CD4-positive, alpha-beta memory T cell (primary cell): ENCODE measurements at regions of chr3 and their contacts with region 1.

Region 1: DNA sequence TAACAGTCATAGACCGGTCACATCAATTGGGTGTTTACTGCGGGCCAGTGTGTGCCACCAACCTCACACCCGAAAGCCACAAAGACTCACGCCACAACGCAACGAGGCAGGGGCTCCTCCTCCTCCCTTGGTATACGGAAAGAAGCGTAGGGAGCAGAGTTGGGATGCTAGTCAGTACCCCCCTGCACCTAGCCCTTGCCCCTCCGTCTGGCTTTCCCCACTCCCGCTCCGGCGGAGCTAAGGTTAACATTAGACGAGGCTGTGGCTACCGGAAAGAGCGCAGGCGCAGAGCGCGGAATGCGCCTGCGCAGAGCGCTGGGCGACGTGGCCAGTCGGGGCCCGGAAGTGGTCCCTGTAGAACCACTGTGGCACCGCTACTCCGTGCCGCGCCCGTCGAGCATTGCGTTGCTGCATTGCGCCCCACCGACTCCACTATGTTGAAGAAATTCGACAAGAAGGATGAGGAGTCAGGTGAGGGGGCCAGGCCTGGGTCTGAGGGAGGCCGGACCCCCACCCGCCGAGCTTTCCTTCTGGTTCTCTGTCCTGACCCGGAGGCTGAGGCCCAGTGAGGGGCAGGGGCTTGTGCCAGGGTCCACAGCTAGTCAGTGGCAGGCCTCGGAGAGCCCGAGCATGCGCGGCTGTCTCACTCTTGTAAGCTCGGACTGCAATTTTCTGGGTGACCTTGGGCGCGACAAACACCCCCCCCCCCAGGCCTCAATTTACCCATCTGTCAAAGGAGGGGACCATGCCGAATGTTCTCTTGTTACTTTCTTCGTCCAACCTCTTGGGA is at the start of gene COPG1:
- DNase-seq: peak; percentile 82 to 91 (median 88)
- H3K4me3 ChIP-seq: peak within 1 kb of the TSS; percentile 88 to 91
- H3K4me3 Mint-ChIP-seq: peak within 1 kb of the TSS; percentile 91 to 98 (median 96)
- H3K27ac ChIP-seq: peak within 1 kb of the TSS; percentile 92
- H3K27ac Mint-ChIP-seq: peak within 1 kb of the TSS; percentile 92 to 98 (median 97)
- H3K4me1 ChIP-seq: peaks cover 30% of the 10 kb centered on the region
- H3K4me1 Mint-ChIP-seq: peaks cover 21 to 64% (median 42%) of the 10 kb centered on the region in 4 donors
- H3K27me3 ChIP-seq: no peaks in the 10 kb centered on the region
- H3K27me3 Mint-ChIP-seq: no peaks in the 10 kb centered on the region
- total RNA-seq, gene COPG1: 147 TPM

Region 2: DNA sequence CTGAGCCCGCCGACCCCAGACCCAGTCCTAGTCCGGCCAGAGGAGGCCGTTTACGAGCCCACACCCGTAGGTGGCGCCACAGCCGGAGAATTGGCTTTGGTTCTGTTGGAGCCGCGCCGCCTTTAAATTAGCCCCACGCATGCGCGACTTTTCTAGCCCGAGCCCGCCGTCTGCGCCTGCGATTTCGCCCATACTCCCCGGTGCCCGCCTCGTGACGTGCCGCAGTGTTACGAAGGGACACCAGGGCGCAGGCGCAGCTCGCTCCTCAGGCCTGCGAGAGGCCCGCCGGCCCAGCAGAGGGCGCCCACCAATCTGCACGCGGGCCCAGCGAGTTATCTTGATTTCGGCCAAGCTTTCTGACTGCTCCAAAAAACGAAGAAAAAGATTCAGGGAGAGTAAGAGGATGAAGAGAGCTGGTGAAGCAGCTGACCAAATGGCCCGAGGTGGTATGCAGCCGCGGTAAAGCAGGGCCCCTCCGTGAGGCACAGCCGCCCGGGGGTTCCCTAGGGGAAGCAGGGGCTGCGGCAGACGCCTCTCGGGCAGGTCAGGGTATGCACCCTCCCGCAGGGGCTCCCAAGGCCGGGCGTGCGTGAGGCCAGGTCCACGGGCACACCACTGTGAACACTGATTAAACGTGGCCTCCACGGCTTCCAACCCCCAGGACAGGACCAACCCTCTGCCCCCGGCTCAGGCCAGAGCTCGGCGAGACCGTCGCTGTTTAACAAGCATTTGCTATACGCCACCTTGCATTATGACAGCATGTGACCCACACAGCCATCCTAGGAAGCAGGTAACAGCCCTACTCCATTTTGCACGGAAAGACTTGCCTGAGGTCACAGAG is 631.7 kb before region 1 on chr3:
- CTCF ChIA-PET with region 1: interaction called, 4 read pairs
- POLR2A ChIA-PET with region 1: interaction called, 5 read pairs
- intact Hi-C with region 1: loop called (anchors 5 kb)
- DNase-seq: peak; percentile 98 to 99 (median 99)
- H3K4me3 ChIP-seq: peak overlapping the region; percentile 81 to 91
- H3K4me3 Mint-ChIP-seq: peak overlapping the region; percentile 93 to 99 (median 96)
- H3K27ac ChIP-seq: peak overlapping the region; percentile 88
- H3K27ac Mint-ChIP-seq: peak overlapping the region; percentile 93 to 99 (median 98)
- H3K4me1 ChIP-seq: peaks cover 23% of the 10 kb centered on the region
- H3K4me1 Mint-ChIP-seq: peaks cover 17 to 30% (median 23%) of the 10 kb centered on the region in 4 donors
- H3K27me3 ChIP-seq: no peaks in the 10 kb centered on the region
- H3K27me3 Mint-ChIP-seq: no peaks in the 10 kb centered on the region

Region 3: GRCh38 chr3:129003578-129004160 is 245.8 kb before region 1 on chr3:
- CTCF ChIA-PET with region 1: interaction called, 14 read pairs
- POLR2A ChIA-PET with region 1: interaction called, 3 read pairs
- intact Hi-C with region 1: no loop called
- DNase-seq: peak; percentile 50 to 64 (median 57)
- H3K4me3 ChIP-seq: no peak overlapping the region
- H3K4me3 Mint-ChIP-seq: peak overlapping the region in 4 of 8 donors; percentile 59 to 73 (median 64)
- H3K27ac ChIP-seq: no peak overlapping the region
- H3K27ac Mint-ChIP-seq: peak overlapping the region in 1 of 7 donors; percentile 47
- H3K4me1 ChIP-seq: peaks cover 36% of the 10 kb centered on the region
- H3K4me1 Mint-ChIP-seq: peaks cover 20 to 47% (median 32%) of the 10 kb centered on the region in 4 donors
- H3K27me3 ChIP-seq: peaks cover 25% of the 10 kb centered on the region
- H3K27me3 Mint-ChIP-seq: peaks cover 22 to 27% of the 10 kb centered on the region in 2 donors

Region 4: DNA sequence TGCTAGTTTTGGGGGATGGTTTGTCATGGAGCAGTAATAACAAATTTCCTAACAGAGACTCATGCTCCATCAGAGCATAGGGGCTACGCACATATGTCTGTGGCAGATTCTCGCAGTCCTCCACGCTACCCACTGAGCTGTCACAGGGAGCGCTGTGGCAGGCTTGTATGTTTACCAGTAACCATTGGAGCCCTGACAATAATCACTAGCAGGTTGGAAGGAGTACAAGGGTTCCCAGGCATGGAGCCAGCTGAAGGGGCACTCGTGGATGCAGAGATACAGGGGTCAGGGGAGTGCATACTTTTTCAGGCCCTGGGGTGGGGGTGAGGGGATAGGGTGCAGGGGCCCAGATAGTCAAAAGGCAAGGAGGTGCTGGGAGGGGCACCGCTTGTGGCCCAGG is 196.8 kb before region 1 on chr3:
- CTCF ChIA-PET with region 1: interaction called, 233 read pairs
- POLR2A ChIA-PET with region 1: interaction called, 7 read pairs
- intact Hi-C with region 1: loop called (anchors 1 kb)
- DNase-seq: no peak
- H3K4me3 ChIP-seq: no peak overlapping the region
- H3K4me3 Mint-ChIP-seq: no peak overlapping the region
- H3K27ac ChIP-seq: no peak overlapping the region
- H3K27ac Mint-ChIP-seq: peak overlapping the region in 3 of 7 donors; percentile 33 to 80 (median 52)
- H3K4me1 ChIP-seq: peaks cover 5% of the 10 kb centered on the region
- H3K4me1 Mint-ChIP-seq: peaks cover 6 to 8% (median 7%) of the 10 kb centered on the region in 4 donors
- H3K27me3 ChIP-seq: no peaks in the 10 kb centered on the region
- H3K27me3 Mint-ChIP-seq: no peaks in the 10 kb centered on the region

Region 5: GRCh38 chr3:129160891-129161859 is 88.3 kb before region 1 on chr3 and contains the start of gene ISY1:
- CTCF ChIA-PET with region 1: interaction called, 17 read pairs
- POLR2A ChIA-PET with region 1: interaction called, 5 read pairs
- intact Hi-C with region 1: loop called (anchors 1 kb)
- DNase-seq: peak; percentile 90 to 93 (median 92)
- H3K4me3 ChIP-seq: peak within 1 kb of the TSS; percentile 75 to 94
- H3K4me3 Mint-ChIP-seq: peak within 1 kb of the TSS; percentile 96 to 100 (median 97)
- H3K27ac ChIP-seq: peak within 1 kb of the TSS; percentile 97
- H3K27ac Mint-ChIP-seq: peak within 1 kb of the TSS; percentile 98 to 100 (median 99)
- H3K4me1 ChIP-seq: peaks cover 23% of the 10 kb centered on the region
- H3K4me1 Mint-ChIP-seq: peaks cover 24 to 59% (median 37%) of the 10 kb centered on the region in 4 donors
- H3K27me3 ChIP-seq: no peaks in the 10 kb centered on the region
- H3K27me3 Mint-ChIP-seq: no peaks in the 10 kb centered on the region
- total RNA-seq, gene ISY1: 29.5 to 34.3 TPM

Region 6: GRCh38 chr3:129224984-129225393 is 24.5 kb before region 1 on chr3:
- CTCF ChIA-PET with region 1: interaction called, 11 read pairs
- POLR2A ChIA-PET with region 1: interaction called, 3 read pairs
- intact Hi-C with region 1: no loop called
- DNase-seq: no peak
- H3K4me3 ChIP-seq: no peak overlapping the region
- H3K4me3 Mint-ChIP-seq: peak overlapping the region in 7 of 8 donors; percentile 2 to 64 (median 46)
- H3K27ac ChIP-seq: no peak overlapping the region
- H3K27ac Mint-ChIP-seq: peak overlapping the region; percentile 24 to 86 (median 67)
- H3K4me1 ChIP-seq: peaks cover 11% of the 10 kb centered on the region
- H3K4me1 Mint-ChIP-seq: peaks cover 6 to 31% (median 17%) of the 10 kb centered on the region in 4 donors
- H3K27me3 ChIP-seq: no peaks in the 10 kb centered on the region
- H3K27me3 Mint-ChIP-seq: no peaks in the 10 kb centered on the region

Region 7: DNA sequence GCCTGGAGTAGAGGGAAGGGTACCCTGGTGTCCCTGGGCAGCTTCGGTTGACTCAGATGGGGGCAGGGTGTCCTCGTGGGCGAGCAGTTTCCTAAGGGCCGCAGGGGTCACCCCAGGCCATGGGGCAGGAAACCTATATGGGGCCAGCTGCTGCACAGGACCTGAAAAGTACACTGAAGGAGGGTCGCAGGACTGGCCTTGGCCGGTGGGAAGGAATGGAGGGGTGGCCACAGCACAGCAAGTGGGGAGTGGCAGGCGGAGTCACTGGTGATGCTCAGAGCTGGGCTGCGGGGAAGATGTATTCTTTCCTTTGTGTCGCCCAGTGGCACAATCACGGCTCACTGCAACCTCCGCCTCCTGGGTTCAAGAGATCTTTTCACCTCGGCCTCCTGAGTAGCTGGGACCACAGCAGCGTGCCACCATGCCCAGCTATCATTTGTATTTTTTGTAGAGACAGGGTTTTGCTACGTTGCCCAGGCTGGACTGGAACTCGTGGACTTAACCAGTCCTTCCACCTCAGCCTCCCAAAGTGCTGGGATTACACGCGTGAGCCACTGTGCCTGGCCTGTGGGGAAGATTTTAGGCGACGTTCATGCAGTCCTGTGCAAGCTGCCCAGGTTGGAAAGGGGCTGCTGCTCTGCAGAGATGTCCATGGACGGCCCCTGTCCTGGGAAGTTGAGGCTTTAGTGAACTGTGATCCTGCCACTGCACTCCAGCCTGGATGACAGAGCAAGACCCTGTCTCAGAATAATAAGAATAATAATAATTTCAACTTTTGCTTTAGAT is 121.8 kb after region 1 on chr3:
- CTCF ChIA-PET with region 1: no interaction called
- POLR2A ChIA-PET with region 1: no interaction called
- intact Hi-C with region 1: no loop called
- DNase-seq: no peak
- H3K4me3 ChIP-seq: no peak overlapping the region
- H3K4me3 Mint-ChIP-seq: no peak overlapping the region
- H3K27ac ChIP-seq: no peak overlapping the region
- H3K27ac Mint-ChIP-seq: no peak overlapping the region
- H3K4me1 ChIP-seq: no peaks in the 10 kb centered on the region
- H3K4me1 Mint-ChIP-seq: no peaks in the 10 kb centered on the region
- H3K27me3 ChIP-seq: no peaks in the 10 kb centered on the region
- H3K27me3 Mint-ChIP-seq: no peaks in the 10 kb centered on the region